ENCODE measurements at regions of chr10 and their contacts with region 1.

Region 1: DNA sequence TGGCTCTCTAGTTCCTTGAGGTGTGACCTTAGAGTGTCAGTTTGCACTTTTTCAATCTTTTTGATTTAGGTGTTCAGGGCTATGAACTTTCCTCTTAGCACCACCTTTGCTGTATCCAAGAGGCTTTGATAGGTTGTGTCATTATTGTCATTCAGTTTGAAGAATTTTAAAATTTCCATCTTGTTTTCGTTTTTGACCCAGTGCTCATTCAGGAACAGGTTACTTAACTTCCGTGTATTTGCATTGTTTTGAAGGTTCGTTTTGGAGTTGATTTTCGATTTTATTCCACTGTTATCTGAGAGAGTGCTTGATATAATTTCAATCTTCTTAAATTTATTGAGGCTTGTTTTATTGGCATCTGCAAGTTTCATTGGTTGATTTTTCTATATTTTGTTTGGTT is 37.3 kb downstream of the FANK1 start:
- H3K4me3 ChIP-seq: no peak overlapping the region
- H3K27ac ChIP-seq: no peak overlapping the region
- H3K4me1 ChIP-seq: no peaks in the 10 kb centered on the region
- CTCF ChIP-seq: no peak

Region 2: GRCh38 chr10:125661941-125662515 is 271.7 kb before region 1 on chr10:
- CTCF ChIA-PET with region 1: no interaction called
- POLR2A ChIA-PET with region 1: no interaction called
- H3K4me3 ChIP-seq: no peak overlapping the region
- H3K27ac ChIP-seq: peak overlapping the region; percentile 55; the same call in 1 of the 2 replicates
- H3K4me1 ChIP-seq: peaks cover 16% of the 10 kb centered on the region
- CTCF ChIP-seq: no peak

Region 3: DNA sequence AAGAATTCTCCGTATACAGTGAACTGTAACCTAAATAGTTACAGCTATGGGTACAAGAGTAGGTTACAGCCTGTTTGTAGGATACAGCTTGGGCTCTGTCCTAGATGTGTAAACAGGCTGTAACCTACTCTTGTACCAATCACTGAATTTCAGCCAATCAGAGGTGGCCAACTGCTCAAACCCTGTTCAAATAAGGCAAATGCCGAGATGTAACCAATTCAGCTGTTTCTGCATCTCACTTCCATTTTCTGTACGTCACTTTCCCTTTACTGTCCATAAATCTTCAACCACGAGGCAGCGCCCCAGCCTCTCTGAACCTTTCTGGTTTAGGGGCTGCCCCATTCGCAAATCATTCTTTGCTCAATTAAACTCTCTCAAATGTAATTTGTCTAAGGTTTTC is 149.7 kb before region 1 on chr10:
- CTCF ChIA-PET with region 1: no interaction called
- POLR2A ChIA-PET with region 1: no interaction called
- H3K4me3 ChIP-seq: no peak overlapping the region
- H3K27ac ChIP-seq: no peak overlapping the region
- H3K4me1 ChIP-seq: no peaks in the 10 kb centered on the region
- CTCF ChIP-seq: no peak

Region 4: DNA sequence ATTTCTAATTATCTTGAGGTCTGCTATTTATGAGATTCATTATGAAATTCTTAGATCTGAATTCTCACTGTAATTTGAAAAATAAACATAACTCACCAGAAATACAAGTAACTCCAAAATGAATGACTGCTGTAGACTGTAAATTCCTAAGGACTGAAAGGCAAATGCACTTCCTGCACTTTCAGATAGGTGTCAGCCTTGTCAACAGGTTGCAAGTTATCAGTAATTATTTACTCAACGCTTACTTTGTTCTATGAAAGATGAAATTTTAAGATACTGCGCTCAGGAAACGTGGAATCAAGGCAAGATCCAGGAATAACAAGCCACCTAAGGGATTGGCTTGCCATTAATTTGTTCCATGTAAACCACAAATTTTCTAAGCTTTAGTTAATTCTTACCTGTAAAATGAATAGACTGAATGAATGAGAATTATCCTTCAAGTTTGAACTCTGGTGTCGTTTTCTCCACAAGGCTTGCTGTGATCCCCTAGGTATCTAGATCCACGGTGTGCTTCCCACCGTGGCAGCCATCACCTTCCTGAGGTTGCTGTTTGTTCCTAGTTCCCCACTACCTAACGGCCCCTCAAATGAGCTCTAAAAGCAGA is 65.2 kb before region 1 on chr10:
- CTCF ChIA-PET with region 1: interaction called, 17 read pairs
- POLR2A ChIA-PET with region 1: no interaction called
- H3K4me3 ChIP-seq: no peak overlapping the region
- H3K27ac ChIP-seq: no peak overlapping the region
- H3K4me1 ChIP-seq: peaks cover 10% of the 10 kb centered on the region
- CTCF ChIP-seq: peak; percentile 38; the same call in 1 of the 2 replicates

Region 5: DNA sequence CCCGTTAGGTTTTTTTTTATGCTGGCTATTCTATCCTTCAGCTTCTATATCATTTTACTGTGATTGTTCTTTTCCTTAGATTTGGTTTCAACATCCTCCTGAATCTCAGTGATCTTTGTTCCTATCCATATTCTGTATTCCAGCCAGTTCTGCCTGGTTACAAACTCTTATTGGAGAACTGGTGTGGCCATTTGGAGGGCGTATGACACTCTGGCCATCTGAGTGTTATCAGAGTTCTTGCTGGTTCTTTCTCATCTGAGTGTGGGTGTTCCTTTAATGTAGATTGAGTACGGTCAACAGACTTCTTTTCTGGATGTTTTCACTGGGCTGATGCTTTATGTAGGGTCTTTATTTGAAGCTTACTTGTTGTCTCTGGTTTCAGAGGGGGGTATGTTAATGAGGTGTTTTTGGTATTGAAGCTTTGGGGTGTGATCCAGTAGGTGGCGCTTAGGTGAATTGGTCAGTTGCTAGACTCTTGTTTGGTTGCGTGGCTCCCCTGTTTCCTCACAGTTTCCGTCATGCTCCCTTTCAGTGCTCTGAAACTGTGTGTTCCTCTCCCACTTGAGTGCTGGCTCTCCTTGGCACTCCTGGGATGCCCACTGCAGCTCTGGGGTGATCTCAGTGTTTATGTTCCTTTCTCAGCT is 43.4 kb after region 1 on chr10:
- CTCF ChIA-PET with region 1: interaction called, 20 read pairs
- POLR2A ChIA-PET with region 1: no interaction called
- H3K4me3 ChIP-seq: no peak overlapping the region
- H3K27ac ChIP-seq: no peak overlapping the region
- H3K4me1 ChIP-seq: no peaks in the 10 kb centered on the region
- CTCF ChIP-seq: no peak

Region 6: GRCh38 chr10:125982260-125982948 is 48.7 kb after region 1 on chr10:
- CTCF ChIA-PET with region 1: interaction called, 20 read pairs
- POLR2A ChIA-PET with region 1: no interaction called
- H3K4me3 ChIP-seq: no peak overlapping the region
- H3K27ac ChIP-seq: no peak overlapping the region
- H3K4me1 ChIP-seq: no peaks in the 10 kb centered on the region
- CTCF ChIP-seq: peak; percentile 54

Region 7: GRCh38 chr10:126504063-126504739 is 570.5 kb after region 1 on chr10:
- CTCF ChIA-PET with region 1: interaction called, 16 read pairs
- POLR2A ChIA-PET with region 1: no interaction called
- H3K4me3 ChIP-seq: no peak overlapping the region
- H3K27ac ChIP-seq: no peak overlapping the region
- H3K4me1 ChIP-seq: no peaks in the 10 kb centered on the region
- CTCF ChIP-seq: no peak

Measured in HEK293 (cell line).